ENCODE measurements at regions of chr6 and their contacts with region 1.

Region 1: GRCh38 chr6:1864496-1864895 is 254.8 kb downstream of the FOXC1 start:
- DNase-seq: no peak
- H3K4me3 ChIP-seq: no peak overlapping the region
- CTCF ChIP-seq: no peak

Region 2: GRCh38 chr6:1894954-1895353 is 30.5 kb after region 1 on chr6:
- in situ Hi-C with region 1: loop called (anchors 5 kb)
- DNase-seq: no peak
- H3K4me3 ChIP-seq: no peak overlapping the region
- CTCF ChIP-seq: no peak

Region 3: GRCh38 chr6:1917626-1918371 is 53.3 kb after region 1 on chr6:
- in situ Hi-C with region 1: no loop called
- DNase-seq: peak; percentile 33
- H3K4me3 ChIP-seq: no peak overlapping the region
- CTCF ChIP-seq: no peak